PC-9 (cell line): ENCODE measurements at regions of chr7 and their contacts with region 1.

Region 1: DNA sequence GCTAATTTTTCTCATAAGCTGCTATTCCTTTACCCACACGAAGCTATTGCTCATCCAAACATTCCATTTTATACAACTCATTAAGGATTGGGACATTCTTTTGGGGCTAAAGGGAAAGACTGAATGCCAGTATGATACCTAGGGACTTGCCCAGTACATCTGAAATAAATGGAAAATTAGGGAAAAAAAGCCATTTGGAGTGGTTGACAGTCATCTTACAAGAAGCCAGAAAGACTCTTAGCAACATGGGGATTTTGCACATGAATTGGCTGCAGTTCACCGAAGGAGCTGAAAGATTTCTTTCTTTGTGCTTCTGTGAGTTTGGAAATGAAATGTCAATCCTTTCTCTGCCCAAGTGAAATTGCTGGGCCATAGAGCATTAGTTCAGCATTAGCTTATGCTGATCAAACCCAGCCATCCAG is 43.3 kb upstream of the MTURN start:
- DNase-seq: peak in 1 of 2 experiments; percentile 84
- H3K4me3 ChIP-seq: no peak overlapping the region
- H3K27ac ChIP-seq: peak overlapping the region; percentile 40
- H3K4me1 ChIP-seq: peaks cover 16% of the 10 kb centered on the region
- H3K27me3 ChIP-seq: no peaks in the 10 kb centered on the region
- CTCF ChIP-seq: no peak

Region 2: GRCh38 chr7:29457565-29458011 is 633.9 kb before region 1 on chr7:
- CTCF ChIA-PET with region 1: no interaction called
- POLR2A ChIA-PET with region 1: interaction called, 10 read pairs
- intact Hi-C with region 1: no loop called
- DNase-seq: no peak
- H3K4me3 ChIP-seq: no peak overlapping the region
- H3K27ac ChIP-seq: no peak overlapping the region
- H3K4me1 ChIP-seq: 0 out of 2 replicates have a peak, but pooled peaks cover 6% of the 10 kb centered on the region
- H3K27me3 ChIP-seq: no peaks in the 10 kb centered on the region; the same call in 1 of the 2 replicates
- CTCF ChIP-seq: no peak

Region 3: DNA sequence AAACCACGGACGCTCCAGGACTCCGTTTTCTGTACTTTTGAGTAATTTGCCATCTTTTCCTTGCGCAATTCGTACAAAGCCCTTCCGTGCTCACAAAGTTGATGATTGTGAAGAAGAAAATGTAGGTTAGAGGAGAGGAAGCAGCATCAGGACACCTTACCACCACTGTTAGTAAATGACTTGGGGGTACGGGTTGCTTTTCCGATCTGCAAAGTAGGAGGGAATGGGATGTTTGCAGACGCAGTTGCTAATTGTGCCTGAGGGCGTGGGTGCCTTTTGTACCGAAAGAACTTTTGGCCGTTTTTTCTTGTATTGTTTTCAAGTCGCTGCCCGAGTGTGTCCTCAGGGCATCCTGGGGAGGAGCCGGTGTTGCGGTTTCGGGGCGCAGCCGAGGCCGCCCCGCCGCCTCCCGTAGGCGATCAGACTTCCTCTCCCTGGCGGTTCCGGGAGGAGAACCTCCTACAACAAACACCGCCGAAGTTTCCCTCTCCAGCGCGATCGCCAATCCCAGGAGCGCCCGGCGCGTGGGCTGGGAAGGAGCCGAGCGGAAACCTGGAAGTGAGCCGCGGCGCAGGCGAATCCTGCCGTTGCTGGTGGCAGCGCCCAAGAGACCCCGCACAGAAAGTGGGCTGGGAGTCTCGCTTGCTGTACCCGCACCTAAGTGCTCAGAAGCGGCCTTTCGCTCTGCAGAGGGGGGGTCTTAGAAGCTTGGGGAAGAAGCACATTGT is 526.8 kb before region 1 on chr7:
- CTCF ChIA-PET with region 1: no interaction called
- POLR2A ChIA-PET with region 1: no interaction called
- intact Hi-C with region 1: no loop called
- DNase-seq: peak; percentile 96 to 98
- H3K4me3 ChIP-seq: peak overlapping the region; percentile 72
- H3K27ac ChIP-seq: peak overlapping the region; percentile 92
- H3K4me1 ChIP-seq: peaks cover 52% of the 10 kb centered on the region
- H3K27me3 ChIP-seq: no peaks in the 10 kb centered on the region
- CTCF ChIP-seq: 0 out of 2 replicates have a peak, but pooled peaks have one; percentile 17

Region 4: GRCh38 chr7:30074422-30075030 is 17.0 kb before region 1 on chr7:
- CTCF ChIA-PET with region 1: no interaction called
- POLR2A ChIA-PET with region 1: no interaction called
- intact Hi-C with region 1: no loop called
- DNase-seq: peak; percentile 7 to 65
- H3K4me3 ChIP-seq: no peak overlapping the region
- H3K27ac ChIP-seq: no peak overlapping the region
- H3K4me1 ChIP-seq: no peaks in the 10 kb centered on the region
- H3K27me3 ChIP-seq: no peaks in the 10 kb centered on the region
- CTCF ChIP-seq: peak; percentile 82